ENCODE measurements at regions of chr11 and their contacts with region 1.

Region 1: GRCh38 chr11:6389921-6390724 is at the start of gene SMPD1:
- DNase-seq: peak; percentile 90 to 97 (median 92)
- ATAC-seq: peak; percentile 83 to 85
- H3K4me3 Mint-ChIP-seq: peak within 1 kb of the TSS; percentile 91 to 97 (median 93)
- H3K27ac Mint-ChIP-seq: peak within 1 kb of the TSS; percentile 96 to 99 (median 98)
- H3K4me1 Mint-ChIP-seq: peaks cover 35 to 82% (median 67%) of the 10 kb centered on the region in 4 donors
- H3K27me3 Mint-ChIP-seq: no peaks in the 10 kb centered on the region
- polyA plus RNA-seq, gene SMPD1: 22.4 to 32.6 (median 31.7) TPM

Region 2: GRCh38 chr11:6419009-6419631 is 29.0 kb after region 1 on chr11 and contains the start of gene APBB1:
- POLR2A ChIA-PET with region 1: interaction called, 161 read pairs
- DNase-seq: peak; percentile 63 to 85 (median 78)
- ATAC-seq: peak; percentile 64 to 73
- H3K4me3 Mint-ChIP-seq: peak within 1 kb of the TSS in 9 of 10 donors; percentile 76 to 89 (median 84)
- H3K27ac Mint-ChIP-seq: peak within 1 kb of the TSS in 9 of 10 donors; percentile 84 to 92 (median 91)
- H3K4me1 Mint-ChIP-seq: peaks cover 8 to 12% (median 10%) of the 10 kb centered on the region in 4 donors
- H3K27me3 Mint-ChIP-seq: peaks cover 0 to 22% (median 2%) of the 10 kb centered on the region in 5 donors
- polyA plus RNA-seq, gene APBB1: 115 to 196 (median 146) TPM

Region 3: DNA sequence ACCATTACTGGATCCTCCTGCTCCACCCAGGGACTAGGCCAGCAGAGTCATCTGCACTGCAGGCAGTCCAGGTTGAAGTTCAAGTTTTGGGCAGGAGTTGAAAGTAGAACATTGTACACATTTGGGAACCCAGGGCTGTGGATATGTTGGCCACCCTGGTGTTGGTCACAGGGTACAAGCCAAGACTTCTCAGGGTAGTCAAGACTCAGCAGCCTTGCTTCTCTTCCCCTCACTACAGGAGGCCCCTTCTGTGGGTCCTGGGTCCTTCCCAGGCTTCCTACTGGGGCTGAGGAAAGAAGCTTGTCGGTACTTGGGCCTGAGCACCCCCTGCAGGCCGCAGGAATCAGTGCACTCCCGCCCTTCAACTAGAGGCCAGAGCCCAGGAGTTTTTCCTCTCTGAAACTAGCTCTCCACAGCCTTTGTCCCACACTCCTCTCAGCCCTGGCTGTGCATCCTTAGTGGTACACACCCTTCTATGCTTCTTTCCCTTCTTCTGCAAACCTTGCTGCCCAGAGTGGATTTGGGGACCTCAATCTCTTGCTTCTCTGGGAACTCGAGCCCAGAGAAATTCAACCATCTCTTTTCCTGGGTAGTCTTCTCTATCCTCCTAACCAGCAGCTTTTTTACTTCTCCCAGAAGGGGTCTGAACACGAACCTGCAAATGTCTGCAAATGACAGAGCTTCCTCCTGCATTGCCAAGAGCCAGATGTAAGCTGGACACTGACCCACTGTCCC is 53.3 kb after region 1 on chr11:
- POLR2A ChIA-PET with region 1: interaction called, 15 read pairs
- DNase-seq: peak; percentile 38 to 71 (median 56)
- ATAC-seq: peak; percentile 84 to 94
- H3K4me3 Mint-ChIP-seq: no peak overlapping the region
- H3K27ac Mint-ChIP-seq: no peak overlapping the region
- H3K4me1 Mint-ChIP-seq: peaks cover 0 to 3% (median under 1%) of the 10 kb centered on the region in 4 donors
- H3K27me3 Mint-ChIP-seq: no peaks in the 10 kb centered on the region

Measured in naive thymus-derived CD8-positive, alpha-beta T cell (primary cell).